ENCODE measurements at regions of chr6 and their contacts with region 1.

Region 1: GRCh38 chr6:108294727-108295625 is at the start of gene AFG1L:
- DNase-seq: peak; percentile 91 to 97 (median 94)
- H3K4me3 ChIP-seq: peak within 1 kb of the TSS; percentile 66 to 98 (median 86)
- H3K27ac ChIP-seq: peak within 1 kb of the TSS; percentile 85 to 99 (median 96)
- H3K27me3 ChIP-seq: no peaks in the 10 kb centered on the region
- CTCF ChIP-seq: peak in 21 of 56 donors; percentile 5 to 56 (median 23)
- total RNA-seq, gene AFG1L: 9.7 to 29.5 (median 16.8) TPM

Region 2: GRCh38 chr6:107634324-107635056 is 660.5 kb before region 1 on chr6:
- intact Hi-C with region 1: no loop called
- DNase-seq: peak in 2 of 10 donors; percentile 20 to 28
- H3K4me3 ChIP-seq: peak overlapping the region in 49 of 59 donors; percentile 6 to 61 (median 44)
- H3K27ac ChIP-seq: peak overlapping the region in 37 of 59 donors; percentile 6 to 77 (median 62)
- H3K27me3 ChIP-seq: no peaks in the 10 kb centered on the region
- CTCF ChIP-seq: no peak

Region 3: GRCh38 chr6:108074359-108075144 is 220.4 kb before region 1 on chr6 and contains the start of gene OSTM1:
- intact Hi-C with region 1: loop called (anchors 10 kb)
- DNase-seq: peak; percentile 76 to 96 (median 86)
- H3K4me3 ChIP-seq: peak within 1 kb of the TSS; percentile 59 to 100 (median 98)
- H3K27ac ChIP-seq: peak within 1 kb of the TSS; percentile 3 to 94 (median 85)
- H3K27me3 ChIP-seq: no peaks in the 10 kb centered on the region
- CTCF ChIP-seq: peak in 23 of 56 donors; percentile 3 to 64 (median 22)
- total RNA-seq, gene OSTM1: 19.6 to 54.7 (median 38.3) TPM

Region 4: GRCh38 chr6:108165714-108166663 is 129.0 kb before region 1 on chr6 and contains the start of gene NR2E1:
- intact Hi-C with region 1: no loop called
- DNase-seq: peak in 4 of 10 donors; percentile 39 to 64 (median 52)
- H3K4me3 ChIP-seq: peak within 1 kb of the TSS; percentile 26 to 71 (median 53)
- H3K27ac ChIP-seq: peak within 1 kb of the TSS in 36 of 59 donors; percentile 3 to 81 (median 56)
- H3K27me3 ChIP-seq: peaks cover 8 to 100% (median 88%) of the 10 kb centered on the region in 45 donors
- CTCF ChIP-seq: no peak
- total RNA-seq, gene NR2E1: 5.0 to 64.6 (median 15.3) TPM

Region 5: GRCh38 chr6:108186226-108186625 is 108.8 kb before region 1 on chr6:
- intact Hi-C with region 1: no loop called
- DNase-seq: no peak
- H3K4me3 ChIP-seq: no peak overlapping the region
- H3K27ac ChIP-seq: no peak overlapping the region
- H3K27me3 ChIP-seq: peaks cover 0 to 4% (median 0%) of the 10 kb centered on the region in 45 donors
- CTCF ChIP-seq: no peak

Region 6: GRCh38 chr6:108312605-108313004 is 17.6 kb after region 1 on chr6:
- intact Hi-C with region 1: no loop called
- DNase-seq: no peak
- H3K4me3 ChIP-seq: no peak overlapping the region
- H3K27ac ChIP-seq: no peak overlapping the region
- H3K27me3 ChIP-seq: no peaks in the 10 kb centered on the region
- CTCF ChIP-seq: no peak